ENCODE measurements at regions of chr15 and their contacts with region 1.

Region 1: GRCh38 chr15:28873541-28874190 is 12.1 kb upstream of the APBA2 start:
- DNase-seq: no peak
- H3K4me3 ChIP-seq: no peak overlapping the region
- H3K27ac ChIP-seq: no peak overlapping the region
- H3K4me1 ChIP-seq: no peaks in the 10 kb centered on the region
- H3K27me3 ChIP-seq: no peaks in the 10 kb centered on the region
- CTCF ChIP-seq: no peak
- POLR2A ChIP-seq: no peak

Region 2: DNA sequence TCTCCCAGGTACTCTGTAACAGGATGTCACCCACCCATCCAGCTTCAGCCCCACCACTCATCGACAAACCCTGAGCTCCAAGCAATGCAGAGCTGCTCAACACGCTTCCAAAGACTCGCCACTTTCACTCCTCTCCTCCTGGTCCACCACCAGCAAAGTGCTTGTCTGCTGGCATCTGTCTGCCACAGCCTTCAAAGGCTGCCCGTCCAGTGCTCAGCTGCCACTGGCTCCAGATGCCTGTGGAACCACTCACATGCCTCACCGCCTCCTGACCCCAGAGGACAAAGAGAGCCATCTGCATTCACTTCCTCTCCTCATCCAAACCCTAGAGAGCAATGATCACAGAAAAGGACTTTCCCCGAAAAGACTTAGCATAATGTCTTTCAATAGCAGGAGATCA is 665.1 kb before region 1 on chr15:
- intact Hi-C with region 1: no loop called
- DNase-seq: no peak
- H3K4me3 ChIP-seq: no peak overlapping the region
- H3K27ac ChIP-seq: no peak overlapping the region
- H3K4me1 ChIP-seq: no peaks in the 10 kb centered on the region
- H3K27me3 ChIP-seq: no peaks in the 10 kb centered on the region
- CTCF ChIP-seq: no peak
- POLR2A ChIP-seq: no peak

Region 3: GRCh38 chr15:28935326-28935725 is 61.7 kb after region 1 on chr15:
- intact Hi-C with region 1: loop called (anchors 10 kb)
- DNase-seq: no peak
- H3K4me3 ChIP-seq: no peak overlapping the region
- H3K27ac ChIP-seq: no peak overlapping the region
- H3K4me1 ChIP-seq: no peaks in the 10 kb centered on the region
- H3K27me3 ChIP-seq: no peaks in the 10 kb centered on the region
- CTCF ChIP-seq: no peak
- POLR2A ChIP-seq: no peak

Region 4: DNA sequence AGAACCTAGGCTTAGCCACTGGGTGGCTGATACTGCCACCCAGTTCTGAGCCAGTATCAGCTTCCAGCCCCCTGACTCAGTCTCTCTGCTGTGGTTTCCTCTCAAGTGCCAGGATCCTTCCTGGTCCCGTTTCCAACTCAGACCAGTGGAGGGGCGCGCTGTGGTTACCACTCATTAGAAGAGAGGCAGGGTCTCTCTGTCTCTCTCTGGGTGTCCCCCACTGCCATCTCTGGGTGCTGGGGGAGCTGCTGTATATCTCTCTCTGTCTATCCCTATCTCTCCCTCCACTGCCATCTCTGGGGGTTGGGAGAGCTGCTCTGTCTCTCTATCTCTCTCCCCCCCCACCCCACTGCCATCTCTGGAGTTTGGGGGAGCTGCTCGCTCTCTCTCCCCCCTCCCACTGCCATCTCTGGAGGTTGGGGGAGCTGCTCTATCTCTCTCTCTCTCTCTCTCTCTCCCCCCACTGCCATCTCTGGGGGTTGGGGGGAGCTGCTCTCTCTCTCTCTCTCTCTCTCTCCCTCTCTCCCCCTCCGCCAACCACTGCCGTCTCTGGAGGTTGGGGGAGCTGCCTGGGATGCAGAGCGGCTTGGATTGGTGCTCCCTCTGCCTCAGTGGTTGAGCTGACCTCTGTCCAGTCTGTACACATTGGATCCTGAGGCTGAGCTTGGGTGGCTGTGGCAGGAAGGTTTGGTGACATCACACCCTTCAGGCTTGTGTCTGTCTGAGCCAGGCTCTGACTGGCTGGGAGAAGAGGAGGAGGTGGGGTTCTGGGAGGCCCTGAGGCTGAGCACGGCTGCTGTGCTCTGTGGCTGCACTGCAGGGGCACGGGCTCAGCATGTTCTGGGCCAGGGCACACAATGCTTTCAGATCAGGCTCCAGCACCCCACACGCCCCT is 111.0 kb after region 1 on chr15:
- intact Hi-C with region 1: no loop called
- DNase-seq: no peak
- H3K4me3 ChIP-seq: no peak overlapping the region
- H3K27ac ChIP-seq: no peak overlapping the region
- H3K4me1 ChIP-seq: no peaks in the 10 kb centered on the region
- H3K27me3 ChIP-seq: no peaks in the 10 kb centered on the region
- CTCF ChIP-seq: no peak
- POLR2A ChIP-seq: no peak

Region 5: GRCh38 chr15:29021891-29022290 is 148.2 kb after region 1 on chr15:
- intact Hi-C with region 1: no loop called
- DNase-seq: no peak
- H3K4me3 ChIP-seq: no peak overlapping the region
- H3K27ac ChIP-seq: no peak overlapping the region
- H3K4me1 ChIP-seq: no peaks in the 10 kb centered on the region
- H3K27me3 ChIP-seq: no peaks in the 10 kb centered on the region
- CTCF ChIP-seq: no peak
- POLR2A ChIP-seq: no peak

Region 6: DNA sequence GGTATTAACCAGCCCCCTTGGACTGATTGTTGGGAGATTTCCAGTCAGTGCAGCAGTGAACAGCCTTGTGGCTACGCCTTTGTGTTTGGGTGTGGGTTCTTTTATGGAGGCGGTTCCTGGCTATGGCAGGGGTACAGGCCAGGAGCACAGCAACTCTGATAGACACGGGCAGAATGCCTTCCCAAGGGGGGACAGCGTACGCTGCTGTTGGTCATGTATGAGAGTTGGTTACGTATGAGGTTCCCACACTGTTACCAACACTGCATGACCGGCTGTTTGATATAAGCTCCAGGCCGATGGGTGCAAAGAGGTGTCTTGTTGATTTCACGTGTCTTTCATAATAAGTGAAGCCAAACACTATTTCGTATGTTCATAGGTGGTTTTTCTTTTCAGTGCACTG is 208.1 kb after region 1 on chr15:
- intact Hi-C with region 1: loop called (anchors 2 kb)
- DNase-seq: no peak
- H3K4me3 ChIP-seq: no peak overlapping the region
- H3K27ac ChIP-seq: no peak overlapping the region
- H3K4me1 ChIP-seq: peaks cover 4% of the 10 kb centered on the region
- H3K27me3 ChIP-seq: no peaks in the 10 kb centered on the region
- CTCF ChIP-seq: no peak
- POLR2A ChIP-seq: no peak

Region 7: GRCh38 chr15:29170521-29170920 is 296.9 kb after region 1 on chr15:
- intact Hi-C with region 1: no loop called
- DNase-seq: no peak
- H3K4me3 ChIP-seq: no peak overlapping the region
- H3K27ac ChIP-seq: no peak overlapping the region
- H3K4me1 ChIP-seq: no peaks in the 10 kb centered on the region
- H3K27me3 ChIP-seq: no peaks in the 10 kb centered on the region
- CTCF ChIP-seq: no peak
- POLR2A ChIP-seq: no peak

Measured in prostate gland (tissue), 2 donors.